WTC11 (cell line): ENCODE measurements at regions of chr2 and their contacts with region 1.

Region 1: GRCh38 chr2:151959238-151959637 is 131.0 kb upstream of the ARL5A start:
- DNase-seq: no peak
- ATAC-seq: no peak
- H3K4me3 Mint-ChIP-seq: no peak overlapping the region
- H3K27ac Mint-ChIP-seq: no peak overlapping the region
- H3K4me1 Mint-ChIP-seq: no peaks in the 10 kb centered on the region
- H3K27me3 Mint-ChIP-seq: no peaks in the 10 kb centered on the region
- CTCF ChIP-seq: no peak

Region 2: GRCh38 chr2:151869291-151869690 is 89.9 kb before region 1 on chr2:
- CTCF ChIA-PET with region 1: no interaction called
- POLR2A ChIA-PET with region 1: no interaction called
- DNase-seq: no peak
- ATAC-seq: peak; percentile 39
- H3K4me3 Mint-ChIP-seq: no peak overlapping the region
- H3K27ac Mint-ChIP-seq: no peak overlapping the region
- H3K4me1 Mint-ChIP-seq: peaks cover 8% of the 10 kb centered on the region; the same call in 1 of the 2 replicates
- H3K27me3 Mint-ChIP-seq: no peaks in the 10 kb centered on the region
- CTCF ChIP-seq: no peak

Region 3: DNA sequence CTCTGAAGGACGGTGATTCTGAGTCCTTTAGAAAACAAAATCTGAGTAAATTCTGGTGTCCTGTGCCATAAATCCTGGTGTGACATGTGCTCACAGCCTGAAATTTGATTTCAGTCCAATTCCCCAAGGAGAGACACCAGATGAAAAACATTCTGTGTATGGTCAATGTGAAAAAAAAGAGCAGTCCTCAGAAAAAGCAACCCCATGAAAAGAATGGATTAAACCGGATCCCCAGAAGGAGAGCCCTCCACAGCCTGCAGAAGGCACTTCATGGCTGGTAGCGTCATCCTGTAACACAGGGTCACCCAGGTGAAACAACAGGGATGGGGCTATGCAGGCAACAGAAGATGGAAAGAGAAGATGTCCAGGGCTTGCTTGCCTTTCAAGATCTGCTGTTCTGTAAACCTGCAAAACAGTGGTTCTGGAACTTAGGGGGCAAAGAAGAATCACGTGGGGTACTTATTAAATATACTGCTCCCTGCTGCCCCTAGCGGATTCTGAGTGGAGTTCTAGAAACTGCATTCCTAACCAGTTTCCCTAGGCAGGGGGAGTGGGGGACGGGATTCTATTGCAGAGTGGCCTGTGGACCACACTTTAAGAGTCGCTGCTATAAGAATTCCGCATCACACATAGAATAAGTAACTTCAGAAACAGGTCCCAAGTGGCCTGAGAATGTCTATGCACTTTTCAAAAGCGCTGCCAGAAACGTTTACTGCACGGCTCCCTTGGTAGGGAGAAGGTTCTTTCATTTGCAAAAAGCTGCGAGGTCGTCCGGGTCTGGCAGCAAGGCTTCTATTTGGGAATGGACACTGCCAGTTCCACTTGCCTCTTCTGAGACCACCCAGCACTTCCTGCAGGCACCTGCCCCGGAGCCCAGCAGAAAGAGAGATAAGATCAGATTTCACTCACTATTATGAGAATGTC is 12.1 kb before region 1 on chr2:
- CTCF ChIA-PET with region 1: interaction called, 10 read pairs
- POLR2A ChIA-PET with region 1: no interaction called
- DNase-seq: peak; percentile 62
- ATAC-seq: peak; percentile 98
- H3K4me3 Mint-ChIP-seq: peak overlapping the region; percentile 43
- H3K27ac Mint-ChIP-seq: peak overlapping the region; percentile 51
- H3K4me1 Mint-ChIP-seq: peaks cover 12% of the 10 kb centered on the region
- H3K27me3 Mint-ChIP-seq: peaks cover 3% of the 10 kb centered on the region; the same call in 1 of the 2 replicates
- CTCF ChIP-seq: peak; percentile 65

Region 4: GRCh38 chr2:151973901-151974199 is 14.6 kb after region 1 on chr2:
- CTCF ChIA-PET with region 1: no interaction called
- POLR2A ChIA-PET with region 1: no interaction called
- DNase-seq: peak; percentile 31
- ATAC-seq: peak; percentile 97
- H3K4me3 Mint-ChIP-seq: no peak overlapping the region
- H3K27ac Mint-ChIP-seq: no peak overlapping the region
- H3K4me1 Mint-ChIP-seq: peaks cover 36% of the 10 kb centered on the region
- H3K27me3 Mint-ChIP-seq: no peaks in the 10 kb centered on the region
- CTCF ChIP-seq: no peak

Region 5: GRCh38 chr2:152093464-152093863 is 134.2 kb after region 1 on chr2:
- CTCF ChIA-PET with region 1: no interaction called
- POLR2A ChIA-PET with region 1: no interaction called
- DNase-seq: no peak
- ATAC-seq: no peak
- H3K4me3 Mint-ChIP-seq: no peak overlapping the region
- H3K27ac Mint-ChIP-seq: no peak overlapping the region
- H3K4me1 Mint-ChIP-seq: peaks cover 10% of the 10 kb centered on the region
- H3K27me3 Mint-ChIP-seq: peaks cover 39% of the 10 kb centered on the region
- CTCF ChIP-seq: no peak